Posterior cingulate gyrus (tissue), 11 donors: ENCODE measurements at regions of chr15 and their contacts with region 1.

Region 1: GRCh38 chr15:44711356-44712107 is at the start of gene B2M:
- DNase-seq: peak; percentile 89 to 99 (median 96)

Region 2: GRCh38 chr15:44381236-44381635 is 330.3 kb before region 1 on chr15:
- intact Hi-C with region 1: no loop called
- DNase-seq: no peak

Region 3: DNA sequence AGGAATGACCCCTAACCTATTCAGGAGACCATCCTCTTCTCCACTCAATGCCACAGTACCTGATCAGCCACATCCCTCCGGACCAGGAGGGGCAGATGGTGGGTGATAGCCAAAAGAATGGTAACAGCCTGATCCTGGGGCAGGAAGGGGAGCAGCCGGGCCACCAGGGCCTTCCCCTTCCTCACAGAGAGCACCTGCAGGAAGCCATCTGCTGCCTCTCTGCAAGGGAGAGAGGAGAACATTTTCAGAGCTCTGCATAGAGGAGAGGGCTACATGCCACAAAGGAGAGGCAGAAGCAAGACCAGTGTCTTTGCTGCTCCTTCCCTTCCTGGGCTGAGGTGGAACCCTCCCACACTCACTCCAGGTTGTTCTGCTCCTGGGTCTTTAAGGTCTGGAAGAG is 42.6 kb before region 1 on chr15:
- intact Hi-C with region 1: loop called (anchors 2 kb)
- DNase-seq: no peak

Region 4: DNA sequence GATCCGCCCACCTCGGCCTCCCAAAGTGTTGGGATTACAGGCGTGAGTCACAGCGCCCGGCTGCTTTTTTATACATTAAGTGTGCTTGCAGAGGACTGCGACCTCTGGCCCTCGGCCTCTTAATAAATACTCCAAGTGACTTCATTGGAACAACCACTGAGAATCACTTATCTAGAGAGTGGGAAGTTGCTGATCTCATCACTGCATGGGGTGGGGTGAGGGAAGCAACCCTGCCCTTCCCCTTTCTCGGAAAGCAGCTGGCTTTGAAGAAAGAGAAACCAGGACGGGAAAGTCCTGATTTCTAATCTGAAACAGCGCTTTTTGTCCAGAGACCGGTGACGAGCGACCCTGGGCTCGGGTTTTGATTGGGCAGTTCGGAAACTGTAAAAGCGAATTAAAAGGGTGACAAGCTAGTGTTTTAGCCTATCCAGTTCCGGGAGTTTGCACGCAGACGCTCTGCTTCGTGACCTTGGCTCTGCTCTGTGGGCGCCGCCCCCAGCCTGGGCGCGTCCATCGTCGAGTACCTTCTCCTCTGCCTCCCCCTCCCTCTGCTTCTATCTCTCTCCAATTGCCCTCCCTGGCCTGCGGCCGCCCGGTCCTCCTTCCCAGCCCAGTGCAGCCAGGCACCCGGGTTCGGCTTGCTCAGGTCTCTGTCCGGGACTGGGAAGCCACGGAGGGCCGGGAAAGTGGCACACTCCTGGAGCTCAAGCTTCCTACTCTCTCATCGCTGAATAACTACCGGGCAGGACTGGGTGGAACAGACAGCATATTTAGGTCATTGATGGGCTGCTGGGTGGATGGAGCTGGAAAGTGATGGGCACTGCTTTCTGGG is 17.3 kb after region 1 on chr15:
- intact Hi-C with region 1: loop called (anchors 2 kb)
- DNase-seq: peak; percentile 89 to 99 (median 94)